ENCODE measurements at regions of chr16 and their contacts with region 1.

Region 1: GRCh38 chr16:72847187-72848027 is 200.5 kb downstream of the ZFHX3 start:
- DNase-seq: no peak
- ATAC-seq: peak in 1 of 2 donors; percentile 29
- H3K4me3 ChIP-seq: no peak overlapping the region
- H3K27ac ChIP-seq: peak overlapping the region; percentile 7
- H3K4me1 ChIP-seq: peaks cover 17% of the 10 kb centered on the region
- H3K27me3 ChIP-seq: no peaks in the 10 kb centered on the region

Region 2: GRCh38 chr16:72753881-72754280 is 93.5 kb before region 1 on chr16:
- intact Hi-C with region 1: no loop called
- DNase-seq: no peak
- ATAC-seq: no peak
- H3K4me3 ChIP-seq: no peak overlapping the region
- H3K27ac ChIP-seq: no peak overlapping the region
- H3K4me1 ChIP-seq: no peaks in the 10 kb centered on the region
- H3K27me3 ChIP-seq: no peaks in the 10 kb centered on the region

Region 3: DNA sequence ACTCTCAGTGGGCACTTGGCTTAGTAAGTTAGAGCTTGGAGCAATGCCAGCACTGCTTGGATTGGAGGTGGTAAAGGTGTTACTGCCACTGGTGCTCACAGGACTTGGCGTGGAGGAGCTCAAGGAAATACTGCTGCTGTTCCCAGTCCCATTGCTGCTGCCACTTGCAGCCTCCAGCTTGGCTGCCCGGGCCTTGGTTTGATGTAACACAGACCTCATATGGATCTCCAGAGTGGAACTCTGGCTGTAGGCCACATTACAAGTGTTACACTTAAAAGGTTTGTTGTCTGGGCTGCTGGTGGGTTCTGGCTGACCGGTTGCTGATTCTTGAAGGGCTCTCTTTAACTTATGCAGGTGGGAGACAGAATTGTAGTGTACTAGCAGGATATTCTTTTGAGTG is 49.8 kb before region 1 on chr16:
- intact Hi-C with region 1: no loop called
- DNase-seq: no peak
- ATAC-seq: peak in 1 of 2 donors; percentile 47
- H3K4me3 ChIP-seq: no peak overlapping the region
- H3K27ac ChIP-seq: no peak overlapping the region
- H3K4me1 ChIP-seq: peaks cover 2% of the 10 kb centered on the region
- H3K27me3 ChIP-seq: no peaks in the 10 kb centered on the region

Region 4: GRCh38 chr16:72921630-72922029 is 74.2 kb after region 1 on chr16:
- intact Hi-C with region 1: no loop called
- DNase-seq: peak; percentile 45 to 78 (median 75)
- ATAC-seq: peak; percentile 47 to 51
- H3K4me3 ChIP-seq: no peak overlapping the region
- H3K27ac ChIP-seq: no peak overlapping the region
- H3K4me1 ChIP-seq: peaks cover 2% of the 10 kb centered on the region
- H3K27me3 ChIP-seq: no peaks in the 10 kb centered on the region

Region 5: DNA sequence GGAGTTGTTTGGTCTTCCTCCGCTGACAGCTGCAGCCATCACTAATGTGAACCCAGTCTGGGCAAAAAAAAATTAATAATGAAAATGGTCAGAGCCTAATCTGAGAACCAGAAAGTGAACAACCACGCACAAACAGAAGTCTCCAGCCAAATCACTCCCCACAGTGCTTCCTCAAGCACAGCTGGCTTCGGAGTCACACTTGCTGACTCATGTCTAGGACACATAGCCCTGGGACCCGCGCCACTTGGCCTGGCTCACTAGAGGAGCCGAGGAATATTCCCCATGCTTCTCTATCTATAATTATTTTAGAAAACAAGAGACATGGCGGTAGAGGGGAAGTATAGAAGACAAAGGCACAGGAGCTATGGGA is 91.4 kb after region 1 on chr16:
- intact Hi-C with region 1: loop called in 2 of 4 experiments (anchors 10 kb)
- DNase-seq: peak; percentile 90 to 98 (median 97)
- ATAC-seq: peak; percentile 95 to 96
- H3K4me3 ChIP-seq: no peak overlapping the region
- H3K27ac ChIP-seq: peak overlapping the region; percentile 97
- H3K4me1 ChIP-seq: peaks cover 17% of the 10 kb centered on the region
- H3K27me3 ChIP-seq: no peaks in the 10 kb centered on the region